ENCODE measurements at regions of chr19 and their contacts with region 1.

Region 1: GRCh38 chr19:45643024-45643926 is 4.1 kb upstream of the EML2 start:
- DNase-seq: peak; percentile 64
- ATAC-seq: peak; percentile 46
- H3K4me3 ChIP-seq: peak overlapping the region; percentile 39 to 67 (median 45); a peak in 5 of 6 replicates
- H3K27ac ChIP-seq: no peak overlapping the region
- H3K4me1 ChIP-seq: peaks cover 68% of the 10 kb centered on the region
- H3K27me3 ChIP-seq: peaks cover 0 to 9% of the 10 kb centered on the region in 2 experiments; a peak in 3 of 5 replicates
- CTCF ChIP-seq: peak; percentile 95
- EP300 ChIP-seq: no peak
- POLR2A ChIP-seq: no peak
- RAD21 ChIP-seq: peak; percentile 92

Region 2: DNA sequence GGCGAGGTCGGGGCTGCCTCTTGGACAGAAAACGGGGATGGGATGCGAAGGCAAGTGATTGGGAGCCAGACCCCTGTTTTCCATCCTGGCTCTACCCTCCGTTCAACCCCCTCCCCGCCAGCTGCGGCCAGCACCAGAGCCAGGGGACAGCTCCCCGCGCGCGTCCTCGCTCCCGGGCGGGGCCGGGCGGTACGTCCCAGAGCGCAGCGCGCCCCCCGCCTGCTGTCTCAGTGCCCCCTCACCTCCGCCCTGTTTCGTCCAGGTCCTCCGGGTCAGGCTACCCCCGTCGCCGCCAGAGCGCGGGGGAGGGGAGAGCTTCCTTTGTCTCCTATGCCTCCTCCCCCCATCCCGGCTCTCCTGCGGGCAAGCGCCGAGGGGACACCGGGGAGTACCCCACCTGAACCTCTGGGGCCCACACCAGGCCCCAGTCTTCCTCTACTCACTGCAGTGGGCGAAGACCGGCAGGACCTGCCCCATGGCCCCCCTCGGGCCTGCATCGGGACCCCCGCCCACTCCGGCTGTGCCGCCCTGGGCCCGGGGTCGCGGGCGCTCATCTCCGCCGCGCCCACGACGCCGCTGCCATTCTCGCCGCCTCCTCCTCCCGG is 146.8 kb before region 1 on chr19:
- CTCF ChIA-PET with region 1: no interaction called
- POLR2A ChIA-PET with region 1: no interaction called
- in situ Hi-C with region 1: no loop called
- intact Hi-C with region 1: loop called (anchors 5 kb)
- DNase-seq: no peak
- ATAC-seq: peak; percentile 16
- H3K4me3 ChIP-seq: peak overlapping the region; percentile 64 to 83 (median 79); a peak in 5 of 6 replicates
- H3K27ac ChIP-seq: no peak overlapping the region
- H3K4me1 ChIP-seq: peaks cover 51% of the 10 kb centered on the region
- H3K27me3 ChIP-seq: no peaks in the 10 kb centered on the region; a peak in 1 of 5 replicates
- CTCF ChIP-seq: no peak
- EP300 ChIP-seq: no peak
- POLR2A ChIP-seq: no peak
- RAD21 ChIP-seq: no peak

Region 3: DNA sequence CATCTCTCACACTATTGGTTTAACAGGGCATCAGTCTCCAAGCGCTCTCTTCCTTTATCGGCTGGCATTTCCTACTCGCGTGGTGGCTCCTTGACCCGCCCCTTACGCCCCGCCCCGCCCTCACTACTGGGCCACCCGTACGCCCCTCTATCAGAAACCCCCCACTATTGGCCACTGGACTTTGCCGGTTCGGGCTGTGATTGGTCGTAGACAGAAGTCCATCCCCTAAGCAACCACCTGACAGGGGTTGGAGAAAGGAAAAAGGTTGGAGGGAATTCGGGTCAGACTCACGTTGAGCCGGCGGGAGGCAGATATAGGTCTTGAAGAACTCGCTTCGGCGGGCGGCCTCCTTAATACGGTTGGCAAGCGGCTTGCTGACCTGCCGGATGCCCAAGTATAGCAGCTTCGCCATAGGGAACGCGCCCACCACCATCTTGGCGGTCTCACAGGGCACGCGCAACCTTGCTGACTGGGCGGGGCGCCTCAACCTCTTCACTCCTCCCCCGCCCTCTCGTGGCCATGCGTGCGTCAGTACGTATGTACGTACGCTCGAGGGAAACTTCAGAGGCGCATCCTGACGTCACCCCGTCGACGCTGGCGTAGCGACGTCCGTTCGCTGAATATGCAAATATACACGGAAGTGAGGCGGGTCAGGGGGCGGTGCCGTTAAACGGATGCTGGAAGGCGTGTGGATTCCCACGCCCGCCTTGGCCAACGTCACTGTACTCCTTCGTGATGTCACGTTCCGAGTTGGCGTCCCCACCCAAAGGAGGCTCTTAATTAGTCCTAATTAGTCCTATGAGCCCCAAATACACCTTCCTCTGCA is 58.7 kb before region 1 on chr19 and contains the start of gene OPA3:
- CTCF ChIA-PET with region 1: no interaction called
- POLR2A ChIA-PET with region 1: interaction called, 56 read pairs
- in situ Hi-C with region 1: no loop called
- intact Hi-C with region 1: no loop called
- DNase-seq: peak; percentile 98
- ATAC-seq: peak; percentile 91
- H3K4me3 ChIP-seq: peak within 1 kb of the TSS; percentile 63 to 80 (median 74)
- H3K27ac ChIP-seq: peak within 1 kb of the TSS; percentile 100
- H3K4me1 ChIP-seq: peaks cover 52% of the 10 kb centered on the region
- H3K27me3 ChIP-seq: no peaks in the 10 kb centered on the region
- CTCF ChIP-seq: peak; percentile 25; the same call in 1 of the 2 replicates
- EP300 ChIP-seq: peak in 1 of 2 experiments; percentile 53; a peak in 1 of 4 replicates
- POLR2A ChIP-seq: peak; percentile 86 to 91
- RAD21 ChIP-seq: peak; percentile 29; the same call in 1 of the 2 replicates
- total RNA-seq, gene OPA3: 7.8 and 8.3 TPM in 2 replicates

Region 4: GRCh38 chr19:45607071-45608029 is 35.9 kb before region 1 on chr19:
- CTCF ChIA-PET with region 1: interaction called, 45 read pairs
- POLR2A ChIA-PET with region 1: interaction called, 18 read pairs
- in situ Hi-C with region 1: no loop called
- intact Hi-C with region 1: loop called (anchors 1 kb)
- DNase-seq: peak; percentile 60
- ATAC-seq: peak; percentile 82
- H3K4me3 ChIP-seq: peak overlapping the region; percentile 36 to 70 (median 47)
- H3K27ac ChIP-seq: no peak overlapping the region
- H3K4me1 ChIP-seq: peaks cover 11% of the 10 kb centered on the region; the same call in 1 of the 2 replicates
- H3K27me3 ChIP-seq: peaks cover 0 to 4% of the 10 kb centered on the region in 2 experiments; a peak in 3 of 5 replicates
- CTCF ChIP-seq: peak; percentile 92
- EP300 ChIP-seq: no peak
- POLR2A ChIP-seq: peak; percentile 28 to 29; a peak in 1 of 4 replicates
- RAD21 ChIP-seq: peak; percentile 79

Region 5: DNA sequence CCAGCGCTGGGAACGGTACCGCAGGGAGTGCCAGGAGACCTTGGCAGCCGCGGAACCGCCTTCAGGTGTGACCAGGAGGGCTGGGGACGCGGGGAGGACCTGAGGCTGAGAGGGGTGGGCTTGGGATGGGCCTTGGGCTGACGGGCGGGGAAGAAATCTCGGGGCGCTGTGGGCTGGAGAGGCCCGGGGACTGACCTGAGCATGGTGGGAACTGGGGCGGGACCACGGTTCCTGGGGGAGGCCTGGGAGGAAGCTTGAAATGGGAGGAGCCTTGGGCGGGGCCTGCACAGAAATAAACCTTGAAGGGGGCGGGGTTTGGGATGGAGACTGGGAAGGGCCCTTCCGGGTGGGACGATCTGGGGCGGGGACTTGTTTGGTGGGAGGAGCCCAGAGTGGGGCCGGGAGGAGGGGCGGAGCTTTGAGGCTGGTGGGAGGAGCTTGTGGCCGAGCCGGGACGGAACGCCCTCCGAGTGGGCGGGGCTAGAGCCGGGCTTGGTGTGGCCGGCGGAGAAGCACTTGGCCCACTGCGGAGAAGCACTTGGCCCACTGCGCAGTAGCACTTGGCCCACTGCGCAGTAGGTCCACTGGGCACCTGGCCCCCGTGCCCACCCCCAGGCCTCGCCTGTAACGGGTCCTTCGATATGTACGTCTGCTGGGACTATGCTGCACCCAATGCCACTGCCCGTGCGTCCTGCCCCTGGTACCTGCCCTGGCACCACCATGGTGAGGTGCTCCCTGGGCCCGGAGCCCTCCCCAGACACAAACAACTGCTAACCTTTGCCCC is 27.6 kb after region 1 on chr19:
- CTCF ChIA-PET with region 1: no interaction called
- POLR2A ChIA-PET with region 1: interaction called, 10 read pairs
- in situ Hi-C with region 1: no loop called
- intact Hi-C with region 1: no loop called
- DNase-seq: peak; percentile 55
- ATAC-seq: peak; percentile 36
- H3K4me3 ChIP-seq: peak overlapping the region in 1 of 3 experiments; percentile 20; a peak in 2 of 6 replicates
- H3K27ac ChIP-seq: no peak overlapping the region
- H3K4me1 ChIP-seq: peaks cover 35% of the 10 kb centered on the region
- H3K27me3 ChIP-seq: peaks cover 2 to 3% of the 10 kb centered on the region in 2 experiments; a peak in 1 of 5 replicates
- CTCF ChIP-seq: no peak
- EP300 ChIP-seq: no peak
- POLR2A ChIP-seq: no peak
- RAD21 ChIP-seq: no peak

Region 6: DNA sequence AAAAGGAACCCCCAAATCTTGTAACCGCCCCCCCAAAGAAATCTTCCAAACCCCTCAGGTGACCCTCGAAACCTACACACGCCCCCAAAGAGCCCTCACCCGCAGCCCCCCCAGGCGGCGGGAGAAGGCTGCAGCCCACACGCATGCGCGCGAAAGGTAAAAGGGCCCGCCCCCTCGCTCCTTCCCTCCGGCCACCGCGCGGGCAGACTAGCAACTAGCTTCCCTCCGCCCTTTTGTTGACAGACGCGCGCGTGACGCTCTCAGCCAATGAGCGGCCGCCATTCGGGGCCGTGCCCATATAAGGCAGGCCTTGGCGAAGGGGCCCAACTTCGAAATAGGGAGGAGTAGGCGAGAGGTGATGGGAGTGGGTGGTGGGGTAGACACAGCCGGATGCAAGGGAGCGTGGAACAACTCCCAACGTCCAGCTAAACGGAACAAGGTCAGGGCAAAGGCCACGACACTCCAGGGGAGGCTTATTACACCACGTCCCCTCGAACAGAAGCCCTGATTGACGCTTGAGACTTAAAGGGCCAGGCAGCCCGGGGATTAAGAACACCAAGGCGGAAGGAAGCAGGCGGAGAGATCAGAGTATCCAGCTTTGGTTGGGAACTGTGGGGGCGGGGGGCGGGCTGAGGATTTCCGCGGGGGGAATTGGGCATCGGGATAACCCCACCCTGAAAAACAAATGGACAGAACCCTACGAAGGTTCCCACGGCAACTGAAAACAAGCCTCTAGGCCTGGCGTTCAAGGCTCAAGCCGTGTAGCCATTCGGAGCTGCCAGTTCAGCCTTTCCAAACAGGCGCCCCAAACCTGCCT is 74.1 kb after region 1 on chr19:
- CTCF ChIA-PET with region 1: no interaction called
- POLR2A ChIA-PET with region 1: interaction called, 16 read pairs
- in situ Hi-C with region 1: no loop called
- intact Hi-C with region 1: no loop called
- DNase-seq: peak; percentile 99
- ATAC-seq: peak; percentile 94
- H3K4me3 ChIP-seq: peak overlapping the region; percentile 71 to 79 (median 73)
- H3K27ac ChIP-seq: peak overlapping the region; percentile 91
- H3K4me1 ChIP-seq: peaks cover 65% of the 10 kb centered on the region
- H3K27me3 ChIP-seq: no peaks in the 10 kb centered on the region; a peak in 1 of 5 replicates
- CTCF ChIP-seq: peak; percentile 37
- EP300 ChIP-seq: peak in 1 of 2 experiments; percentile 66; a peak in 2 of 4 replicates
- POLR2A ChIP-seq: peak; percentile 41 to 60; a peak in 3 of 4 replicates
- RAD21 ChIP-seq: peak; percentile 8; the same call in 1 of the 2 replicates